ENCODE measurements at regions of chr1 and their contacts with region 1.

Region 1: DNA sequence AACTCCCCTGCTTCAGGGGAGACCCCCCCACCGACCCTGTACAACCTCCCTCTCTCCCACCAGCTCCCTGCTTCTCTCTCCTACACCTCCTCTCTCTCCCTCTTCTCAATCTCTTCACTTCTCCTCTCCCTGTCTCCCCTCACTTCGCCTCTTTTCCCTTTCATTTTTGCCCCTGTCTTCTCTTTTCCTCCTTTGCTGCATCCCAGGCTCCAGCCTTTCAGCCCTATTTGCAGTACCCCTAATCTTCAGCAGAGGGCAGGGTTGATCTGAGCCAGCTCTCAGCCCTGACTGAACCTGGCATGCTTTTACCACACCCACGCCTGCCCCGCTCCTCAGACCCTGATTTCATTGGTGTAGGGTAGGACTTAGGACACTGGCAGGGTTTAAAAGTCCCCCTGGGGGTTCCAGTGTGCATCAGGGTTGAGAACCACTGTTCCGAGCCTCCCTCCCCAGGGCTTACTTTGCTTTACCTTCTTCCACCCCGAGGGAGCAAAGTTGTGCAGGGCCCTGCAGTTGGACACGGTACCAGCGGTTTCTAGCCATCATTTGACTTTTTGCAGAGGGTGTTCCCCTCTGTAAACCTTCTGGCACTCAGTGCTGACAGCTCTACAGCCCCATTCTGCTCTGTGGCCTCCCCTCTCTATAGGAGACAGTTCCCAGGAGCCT is 67.3 kb upstream of the CNTN2 start:
- DNase-seq: peak; percentile 25 to 62 (median 55)
- H3K4me3 ChIP-seq: no peak overlapping the region
- H3K27ac ChIP-seq: no peak overlapping the region
- H3K4me1 ChIP-seq: no peaks in the 10 kb centered on the region
- H3K27me3 ChIP-seq: no peaks in the 10 kb centered on the region
- CTCF ChIP-seq: peak; percentile 63 to 70 (median 66)
- EP300 ChIP-seq: no peak
- POLR2A ChIP-seq: no peak

Region 2: GRCh38 chr1:205061665-205062069 is 86.0 kb after region 1 on chr1:
- intact Hi-C with region 1: loop called in 3 of 4 experiments (anchors 5 kb)
- DNase-seq: peak; percentile 48 to 84 (median 82)
- H3K4me3 ChIP-seq: no peak overlapping the region
- H3K27ac ChIP-seq: no peak overlapping the region
- H3K4me1 ChIP-seq: no peaks in the 10 kb centered on the region
- H3K27me3 ChIP-seq: no peaks in the 10 kb centered on the region
- CTCF ChIP-seq: peak; percentile 68 to 79 (median 70)
- EP300 ChIP-seq: no peak
- POLR2A ChIP-seq: no peak

Region 3: DNA sequence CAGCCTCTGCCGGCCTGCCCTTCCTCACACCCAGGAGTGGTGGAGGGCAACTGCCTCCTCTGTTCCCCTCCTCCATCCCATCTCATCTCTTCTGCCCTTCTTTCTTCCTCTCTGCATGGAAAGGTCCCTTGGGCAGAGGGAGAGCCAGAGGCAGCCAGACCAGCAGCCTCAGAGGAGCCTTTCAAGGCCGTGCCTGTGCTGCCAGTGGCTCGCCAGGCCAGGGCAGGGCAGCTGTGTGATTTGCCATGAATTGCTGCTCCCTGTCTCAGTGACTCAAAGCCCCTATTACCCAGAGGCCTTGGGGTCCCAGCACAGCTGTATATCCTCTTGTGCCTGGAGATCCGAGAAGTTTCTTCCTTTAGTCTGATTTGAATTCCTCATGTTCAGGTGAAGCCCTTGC is 273.9 kb after region 1 on chr1:
- intact Hi-C with region 1: loop called in 1 of 4 experiments (anchors 5 kb)
- DNase-seq: no peak
- H3K4me3 ChIP-seq: no peak overlapping the region
- H3K27ac ChIP-seq: peak overlapping the region; percentile 11 to 70
- H3K4me1 ChIP-seq: peaks cover 49% of the 10 kb centered on the region
- H3K27me3 ChIP-seq: no peaks in the 10 kb centered on the region
- CTCF ChIP-seq: no peak
- EP300 ChIP-seq: no peak
- POLR2A ChIP-seq: no peak